Right ventricle myocardium inferior (tissue), 1 donor: ENCODE measurements at regions of chr5 and their contacts with region 1.

Region 1: GRCh38 chr5:34898258-34898895 is 16.9 kb downstream of the RAD1 start:
- DNase-seq: peak; percentile 64
- ATAC-seq: peak; percentile 80

Region 2: GRCh38 chr5:34522599-34523386 is 375.6 kb before region 1 on chr5:
- intact Hi-C with region 1: loop called (anchors 1 kb)
- DNase-seq: no peak
- ATAC-seq: peak; percentile 76

Region 3: DNA sequence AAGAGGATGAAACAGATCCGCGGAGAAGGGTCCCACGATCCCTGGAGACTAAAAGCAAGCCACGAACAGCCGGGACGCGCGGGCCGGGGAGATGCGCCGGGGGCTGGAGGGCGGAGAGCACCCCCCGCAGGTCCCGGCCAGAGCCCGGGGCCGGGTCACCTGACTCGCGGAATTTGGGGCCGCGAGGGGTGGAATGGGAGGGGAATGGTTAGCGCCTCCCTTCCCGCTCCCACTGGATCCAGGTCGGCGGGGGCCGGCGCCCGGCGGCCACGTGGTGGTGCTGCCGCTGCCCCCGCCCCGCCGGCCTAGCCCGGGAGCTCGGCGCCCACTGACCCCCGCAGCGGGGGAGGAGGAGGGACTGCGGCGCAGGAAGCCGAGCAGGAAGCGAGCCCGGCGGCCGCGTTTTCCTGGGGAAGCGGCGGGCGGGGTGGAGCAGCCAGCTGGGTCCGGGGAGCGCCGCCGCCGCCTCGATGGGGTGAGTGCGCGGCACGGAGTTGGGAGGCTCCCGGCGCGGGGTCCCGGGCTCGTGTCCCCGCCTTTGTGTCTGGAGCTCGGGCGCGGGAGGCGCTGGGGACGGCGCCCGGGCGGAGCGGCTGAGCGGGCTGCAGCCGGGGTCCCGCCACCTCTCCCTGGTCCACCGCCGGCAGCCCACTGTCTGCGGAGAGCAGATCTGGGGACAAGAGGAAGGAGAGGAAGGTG is 242.2 kb before region 1 on chr5 and contains the start of gene RAI14:
- intact Hi-C with region 1: loop called (anchors 10 kb)
- DNase-seq: peak; percentile 77
- ATAC-seq: peak; percentile 92
- total RNA-seq, gene RAI14: 6.7 TPM